CD14-positive monocyte (primary cell): ENCODE measurements at regions of chr13 and their contacts with region 1.

Region 1: GRCh38 chr13:36346222-36347083 is at the start of gene SPART:
- DNase-seq: peak; percentile 92 to 97 (median 94)
- H3K4me3 ChIP-seq: peak within 1 kb of the TSS; percentile 72 to 98 (median 90)
- H3K4me3 Mint-ChIP-seq: peak within 1 kb of the TSS; percentile 89 to 94
- H3K27ac ChIP-seq: peak within 1 kb of the TSS; percentile 95 to 100
- H3K27ac Mint-ChIP-seq: peak within 1 kb of the TSS; percentile 99 to 100 (median 99)
- H3K4me1 ChIP-seq: peaks cover 32 to 40% of the 10 kb centered on the region in 2 donors
- H3K4me1 Mint-ChIP-seq: peaks cover 38% of the 10 kb centered on the region
- H3K27me3 ChIP-seq: no peaks in the 10 kb centered on the region
- H3K27me3 Mint-ChIP-seq: no peaks in the 10 kb centered on the region
- CTCF ChIP-seq: peak; percentile 97
- polyA plus RNA-seq, gene SPART: 24.4 to 37.0 (median 29.8) TPM

Region 2: DNA sequence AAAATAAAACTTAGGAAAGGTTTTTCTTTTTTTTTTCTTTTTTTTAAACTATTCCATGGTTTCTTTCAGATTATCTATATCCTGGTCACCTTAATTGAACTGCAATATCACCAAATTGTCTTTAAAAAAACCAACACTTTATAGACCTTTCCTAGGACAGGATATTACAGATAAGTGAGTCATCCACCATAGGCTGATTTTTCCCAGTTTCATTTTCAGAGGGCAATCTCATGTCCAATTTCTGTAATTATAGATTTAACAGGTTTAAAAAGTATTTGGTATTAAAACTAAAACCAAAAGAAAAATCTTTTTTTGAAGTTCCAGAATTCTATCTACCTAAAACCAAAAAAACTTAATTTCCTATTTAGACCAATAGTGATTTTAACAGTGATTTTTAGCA is 13.5 kb before region 1 on chr13:
- intact Hi-C with region 1: loop called in 1 of 2 experiments (anchors 1 kb)
- DNase-seq: peak; percentile 18 to 56 (median 40)
- H3K4me3 ChIP-seq: no peak overlapping the region
- H3K4me3 Mint-ChIP-seq: no peak overlapping the region
- H3K27ac ChIP-seq: peak overlapping the region in 1 of 2 donors; percentile 52
- H3K27ac Mint-ChIP-seq: peak overlapping the region in 1 of 7 donors; percentile 44
- H3K4me1 ChIP-seq: peaks cover 0 to 4% of the 10 kb centered on the region in 2 donors
- H3K4me1 Mint-ChIP-seq: peaks cover 8% of the 10 kb centered on the region
- H3K27me3 ChIP-seq: no peaks in the 10 kb centered on the region
- H3K27me3 Mint-ChIP-seq: no peaks in the 10 kb centered on the region
- CTCF ChIP-seq: no peak

Region 3: GRCh38 chr13:36736119-36736726 is 389.8 kb after region 1 on chr13:
- intact Hi-C with region 1: loop called in 1 of 2 experiments (anchors 5 kb)
- DNase-seq: peak; percentile 29 to 41 (median 38)
- H3K4me3 ChIP-seq: no peak overlapping the region
- H3K4me3 Mint-ChIP-seq: no peak overlapping the region
- H3K27ac ChIP-seq: no peak overlapping the region
- H3K27ac Mint-ChIP-seq: no peak overlapping the region
- H3K4me1 ChIP-seq: no peaks in the 10 kb centered on the region
- H3K4me1 Mint-ChIP-seq: no peaks in the 10 kb centered on the region
- H3K27me3 ChIP-seq: no peaks in the 10 kb centered on the region
- H3K27me3 Mint-ChIP-seq: peaks cover 0 to 3% (median 0%) of the 10 kb centered on the region in 3 donors
- CTCF ChIP-seq: peak; percentile 88

Region 4: GRCh38 chr13:36818804-36819738 is 472.6 kb after region 1 on chr13 and contains the start of gene RFXAP:
- intact Hi-C with region 1: loop called in 1 of 2 experiments (anchors 5 kb)
- DNase-seq: peak; percentile 88 to 89 (median 88)
- H3K4me3 ChIP-seq: peak within 1 kb of the TSS; percentile 73 to 93 (median 80)
- H3K4me3 Mint-ChIP-seq: peak within 1 kb of the TSS; percentile 90 to 97
- H3K27ac ChIP-seq: peak within 1 kb of the TSS; percentile 30 to 81
- H3K27ac Mint-ChIP-seq: peak within 1 kb of the TSS; percentile 75 to 93 (median 86)
- H3K4me1 ChIP-seq: peaks cover 17 to 30% of the 10 kb centered on the region in 2 donors
- H3K4me1 Mint-ChIP-seq: peaks cover 48% of the 10 kb centered on the region
- H3K27me3 ChIP-seq: no peaks in the 10 kb centered on the region
- H3K27me3 Mint-ChIP-seq: peaks cover 0 to 3% (median 0%) of the 10 kb centered on the region in 3 donors
- CTCF ChIP-seq: no peak
- polyA plus RNA-seq, gene RFXAP: 1.1 to 3.3 (median 1.8) TPM

Region 5: GRCh38 chr13:36999054-36999714 is 652.7 kb after region 1 on chr13 and contains the start of gene ALG5:
- intact Hi-C with region 1: loop called in 1 of 2 experiments (anchors 5 kb)
- DNase-seq: peak; percentile 87 to 91 (median 87)
- H3K4me3 ChIP-seq: peak within 1 kb of the TSS; percentile 92 to 96 (median 93)
- H3K4me3 Mint-ChIP-seq: peak within 1 kb of the TSS; percentile 100
- H3K27ac ChIP-seq: peak within 1 kb of the TSS; percentile 96 to 99
- H3K27ac Mint-ChIP-seq: peak within 1 kb of the TSS; percentile 99 to 100 (median 100)
- H3K4me1 ChIP-seq: peaks cover 17 to 25% of the 10 kb centered on the region in 2 donors
- H3K4me1 Mint-ChIP-seq: peaks cover 24% of the 10 kb centered on the region
- H3K27me3 ChIP-seq: no peaks in the 10 kb centered on the region
- H3K27me3 Mint-ChIP-seq: no peaks in the 10 kb centered on the region
- CTCF ChIP-seq: peak; percentile 98
- polyA plus RNA-seq, gene ALG5: 19.3 to 77.5 (median 73.3) TPM